ENCODE measurements at regions of chr2 and their contacts with region 1.

Region 1: GRCh38 chr2:142642654-142643053 is 234.8 kb upstream of the KYNU start:
- DNase-seq: no peak
- ATAC-seq: no peak
- H3K4me3 ChIP-seq: no peak overlapping the region
- H3K27ac ChIP-seq: no peak overlapping the region
- H3K4me1 ChIP-seq: no peaks in the 10 kb centered on the region
- H3K27me3 ChIP-seq: no peaks in the 10 kb centered on the region
- CTCF ChIP-seq: no peak
- EP300 ChIP-seq: no peak
- POLR2A ChIP-seq: no peak
- RAD21 ChIP-seq: no peak

Region 2: DNA sequence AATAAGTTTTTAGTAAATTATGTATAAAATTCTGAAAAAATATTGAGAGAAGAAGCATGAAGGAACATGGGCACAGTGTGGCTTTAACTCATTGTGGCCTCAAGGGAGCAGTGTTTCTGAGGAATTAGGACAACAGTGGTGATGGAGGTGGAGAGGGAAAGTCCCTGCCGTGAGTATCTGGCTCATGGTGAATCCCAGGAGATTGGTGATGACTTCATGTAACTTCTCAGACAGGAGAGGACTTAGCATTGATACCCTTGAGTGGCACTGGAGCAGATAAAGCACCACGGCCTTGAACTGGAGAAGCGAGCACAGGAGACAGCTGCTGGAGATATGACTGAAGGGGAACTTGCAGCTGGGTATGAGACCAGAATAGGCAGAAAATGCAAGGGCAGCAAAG is 476.9 kb before region 1 on chr2:
- CTCF ChIA-PET with region 1: no interaction called
- POLR2A ChIA-PET with region 1: no interaction called
- RAD21 ChIA-PET with region 1: no interaction called
- SMC1A ChIA-PET with region 1: no interaction called
- in situ Hi-C with region 1: no loop called
- intact Hi-C with region 1: loop called (anchors 10 kb)
- DNase-seq: peak; percentile 37
- ATAC-seq: peak; percentile 87
- H3K4me3 ChIP-seq: no peak overlapping the region
- H3K27ac ChIP-seq: no peak overlapping the region
- H3K4me1 ChIP-seq: no peaks in the 10 kb centered on the region
- H3K27me3 ChIP-seq: no peaks in the 10 kb centered on the region
- CTCF ChIP-seq: peak; percentile 20 to 46 (median 20); a peak in 3 of 6 replicates
- EP300 ChIP-seq: no peak
- POLR2A ChIP-seq: no peak
- RAD21 ChIP-seq: peak; percentile 51; the same call in 1 of the 2 replicates

Measured in GM12878 (cell line).